ENCODE measurements at regions of chr11 and their contacts with region 1.

Region 1: GRCh38 chr11:77091146-77091940 is 11.3 kb upstream of the OMP start:
- DNase-seq: peak; percentile 50
- ATAC-seq: peak; percentile 87
- H3K4me3 ChIP-seq: no peak overlapping the region
- H3K27ac ChIP-seq: no peak overlapping the region
- H3K4me1 ChIP-seq: peaks cover 18% of the 10 kb centered on the region; the same call in 1 of the 2 replicates
- H3K27me3 ChIP-seq: no peaks in the 10 kb centered on the region
- CTCF ChIP-seq: peak; percentile 99

Region 2: GRCh38 chr11:77053217-77054015 is 37.9 kb before region 1 on chr11:
- CTCF ChIA-PET with region 1: interaction called, 80 read pairs
- POLR2A ChIA-PET with region 1: no interaction called
- in situ Hi-C with region 1: no loop called
- intact Hi-C with region 1: no loop called
- DNase-seq: no peak
- ATAC-seq: no peak
- H3K4me3 ChIP-seq: no peak overlapping the region
- H3K27ac ChIP-seq: no peak overlapping the region
- H3K4me1 ChIP-seq: no peaks in the 10 kb centered on the region
- H3K27me3 ChIP-seq: no peaks in the 10 kb centered on the region
- CTCF ChIP-seq: no peak

Region 3: DNA sequence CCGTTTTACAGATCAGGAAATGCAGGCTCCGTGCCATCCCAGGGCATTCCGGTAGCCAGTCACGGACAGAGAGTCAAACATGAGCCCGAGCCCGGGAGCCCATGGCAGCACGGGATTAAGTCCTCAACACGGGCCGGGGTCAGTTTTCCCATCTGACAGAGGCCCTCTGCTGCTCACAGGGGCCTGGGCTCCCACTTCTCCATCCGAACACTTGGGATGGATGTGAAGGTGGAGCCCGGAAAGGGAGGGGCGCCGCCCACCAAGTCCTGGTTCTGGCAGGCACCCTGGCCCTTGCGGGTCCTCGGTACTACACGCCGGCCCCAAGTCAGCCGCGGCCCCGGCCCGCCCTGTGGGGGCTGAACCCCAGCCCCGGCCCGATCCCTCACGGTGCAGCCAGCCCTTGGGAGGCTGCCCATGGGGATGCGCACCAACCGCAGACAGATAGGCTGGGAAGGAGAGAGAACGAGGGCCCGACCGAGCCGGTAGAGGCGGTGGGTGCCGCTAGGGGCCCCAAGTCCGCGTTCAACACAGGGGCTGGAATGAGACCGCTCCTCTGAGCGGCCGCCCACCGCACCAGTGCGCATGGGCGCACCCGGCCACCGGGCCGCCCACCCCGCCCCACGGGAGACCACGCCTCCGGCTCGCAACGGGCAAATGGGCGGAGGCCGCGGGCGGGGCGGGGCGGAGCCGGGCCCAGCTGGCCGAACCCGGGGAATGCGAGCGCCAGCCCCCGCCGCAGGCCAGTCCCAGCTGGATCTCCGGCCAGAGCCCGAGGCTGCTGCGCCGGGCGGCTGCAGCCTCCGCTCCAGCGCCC is 24.9 kb before region 1 on chr11 and contains the start of gene CAPN5:
- CTCF ChIA-PET with region 1: interaction called, 10 read pairs
- POLR2A ChIA-PET with region 1: no interaction called
- in situ Hi-C with region 1: no loop called
- intact Hi-C with region 1: no loop called
- DNase-seq: no peak
- ATAC-seq: peak; percentile 94
- H3K4me3 ChIP-seq: peak within 1 kb of the TSS; percentile 74 to 79
- H3K27ac ChIP-seq: peak within 1 kb of the TSS; percentile 77
- H3K4me1 ChIP-seq: peaks cover 6% of the 10 kb centered on the region
- H3K27me3 ChIP-seq: no peaks in the 10 kb centered on the region
- CTCF ChIP-seq: no peak; the same call in 1 of the 2 replicates
- total RNA-seq, gene CAPN5: 17.3 TPM

Region 4: DNA sequence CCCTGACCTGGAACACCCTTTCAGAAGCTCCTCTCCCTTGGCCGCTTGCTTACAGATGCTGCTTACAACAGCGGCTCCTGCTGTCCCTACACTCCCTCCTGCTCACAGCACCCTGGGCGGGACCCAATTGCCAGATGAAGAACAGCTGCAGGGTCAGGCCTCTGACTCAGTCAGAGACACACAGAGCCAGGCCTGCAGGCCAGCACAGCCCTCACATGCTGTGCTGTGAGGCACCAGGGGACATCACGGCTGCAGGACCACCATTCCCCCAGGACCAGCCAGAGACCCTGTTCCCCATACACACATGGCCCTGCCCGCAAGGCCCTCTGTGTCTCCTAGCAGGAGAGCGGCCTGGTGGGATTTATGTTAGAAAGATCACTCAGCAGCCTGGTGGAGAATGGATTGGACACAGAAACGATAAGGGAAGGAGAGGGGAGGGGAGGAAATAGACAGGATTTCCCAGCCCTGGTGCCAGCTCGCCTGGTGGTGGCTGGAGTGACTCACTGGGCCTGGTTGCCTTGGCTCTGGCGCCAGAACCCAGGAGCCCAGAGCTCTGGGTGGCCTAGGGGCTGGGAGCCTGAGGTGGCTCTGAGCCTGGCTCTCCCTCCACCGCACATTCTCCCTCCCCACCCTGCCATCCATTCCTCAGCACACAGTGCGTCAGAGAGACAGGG is 17.9 kb before region 1 on chr11:
- CTCF ChIA-PET with region 1: interaction called, 14 read pairs
- POLR2A ChIA-PET with region 1: no interaction called
- in situ Hi-C with region 1: no loop called
- intact Hi-C with region 1: no loop called
- DNase-seq: no peak
- ATAC-seq: peak; percentile 80
- H3K4me3 ChIP-seq: no peak overlapping the region
- H3K27ac ChIP-seq: no peak overlapping the region
- H3K4me1 ChIP-seq: peaks cover 9% of the 10 kb centered on the region
- H3K27me3 ChIP-seq: no peaks in the 10 kb centered on the region
- CTCF ChIP-seq: no peak

Region 5: GRCh38 chr11:77677138-77677537 is 585.8 kb after region 1 on chr11:
- CTCF ChIA-PET with region 1: no interaction called
- POLR2A ChIA-PET with region 1: no interaction called
- in situ Hi-C with region 1: no loop called
- intact Hi-C with region 1: no loop called
- DNase-seq: no peak
- ATAC-seq: no peak
- H3K4me3 ChIP-seq: no peak overlapping the region
- H3K27ac ChIP-seq: no peak overlapping the region
- H3K4me1 ChIP-seq: no peaks in the 10 kb centered on the region
- H3K27me3 ChIP-seq: no peaks in the 10 kb centered on the region
- CTCF ChIP-seq: no peak; the same call in 1 of the 2 replicates